ENCODE measurements at regions of chr11 and their contacts with region 1.

Region 1: GRCh38 chr11:35087648-35088047 is 51.3 kb upstream of the CD44 start:
- DNase-seq: no peak
- ATAC-seq: no peak
- H3K4me3 Mint-ChIP-seq: no peak overlapping the region
- H3K27ac Mint-ChIP-seq: peak overlapping the region; percentile 87
- H3K4me1 Mint-ChIP-seq: peaks cover 67% of the 10 kb centered on the region
- H3K27me3 Mint-ChIP-seq: no peaks in the 10 kb centered on the region
- CTCF ChIP-seq: no peak

Region 2: DNA sequence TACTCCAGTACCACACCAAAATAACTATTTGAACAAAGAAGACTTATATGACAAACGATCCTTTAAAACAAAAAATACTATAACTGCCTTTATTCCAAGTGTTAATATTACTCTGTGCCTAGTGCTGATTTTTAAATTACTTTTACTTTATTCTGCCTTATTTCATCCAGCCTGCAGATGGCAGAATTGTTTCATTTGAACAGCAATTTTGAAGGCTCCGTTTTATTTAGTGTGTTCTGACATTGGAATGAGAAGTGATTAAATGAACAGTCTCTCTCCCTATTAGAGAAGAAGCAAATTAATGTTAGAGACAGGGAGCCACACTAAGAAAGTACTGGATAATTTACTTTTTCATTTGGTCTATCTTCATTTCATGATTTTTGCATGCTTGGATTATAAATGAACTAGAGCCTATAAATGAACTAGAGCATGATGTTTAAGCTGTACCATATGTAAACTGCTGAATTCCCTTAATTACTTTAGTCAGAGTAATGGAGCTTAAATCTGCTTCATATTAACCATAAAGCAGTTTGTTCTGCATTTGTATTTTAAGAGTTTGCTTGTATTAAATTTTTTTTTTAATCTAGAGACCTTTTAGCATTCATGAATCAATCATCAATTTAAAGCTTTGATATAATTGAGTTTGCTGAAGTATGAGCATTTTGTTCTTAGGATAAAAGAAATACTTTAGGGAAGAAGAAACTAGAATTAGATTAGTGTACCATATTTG is 161.4 kb before region 1 on chr11:
- CTCF ChIA-PET with region 1: no interaction called
- POLR2A ChIA-PET with region 1: no interaction called
- intact Hi-C with region 1: no loop called
- DNase-seq: no peak
- ATAC-seq: peak; percentile 50
- H3K4me3 Mint-ChIP-seq: no peak overlapping the region
- H3K27ac Mint-ChIP-seq: no peak overlapping the region
- H3K4me1 Mint-ChIP-seq: peaks cover 8% of the 10 kb centered on the region
- H3K27me3 Mint-ChIP-seq: no peaks in the 10 kb centered on the region
- CTCF ChIP-seq: peak; percentile 63

Region 3: GRCh38 chr11:35106595-35106994 is 18.9 kb after region 1 on chr11:
- CTCF ChIA-PET with region 1: no interaction called
- POLR2A ChIA-PET with region 1: interaction called, 4 read pairs
- intact Hi-C with region 1: loop called (anchors 1 kb)
- DNase-seq: no peak
- ATAC-seq: peak; percentile 95
- H3K4me3 Mint-ChIP-seq: peak overlapping the region; percentile 72
- H3K27ac Mint-ChIP-seq: peak overlapping the region; percentile 83
- H3K4me1 Mint-ChIP-seq: peaks cover 71% of the 10 kb centered on the region
- H3K27me3 Mint-ChIP-seq: no peaks in the 10 kb centered on the region
- CTCF ChIP-seq: no peak

Region 4: DNA sequence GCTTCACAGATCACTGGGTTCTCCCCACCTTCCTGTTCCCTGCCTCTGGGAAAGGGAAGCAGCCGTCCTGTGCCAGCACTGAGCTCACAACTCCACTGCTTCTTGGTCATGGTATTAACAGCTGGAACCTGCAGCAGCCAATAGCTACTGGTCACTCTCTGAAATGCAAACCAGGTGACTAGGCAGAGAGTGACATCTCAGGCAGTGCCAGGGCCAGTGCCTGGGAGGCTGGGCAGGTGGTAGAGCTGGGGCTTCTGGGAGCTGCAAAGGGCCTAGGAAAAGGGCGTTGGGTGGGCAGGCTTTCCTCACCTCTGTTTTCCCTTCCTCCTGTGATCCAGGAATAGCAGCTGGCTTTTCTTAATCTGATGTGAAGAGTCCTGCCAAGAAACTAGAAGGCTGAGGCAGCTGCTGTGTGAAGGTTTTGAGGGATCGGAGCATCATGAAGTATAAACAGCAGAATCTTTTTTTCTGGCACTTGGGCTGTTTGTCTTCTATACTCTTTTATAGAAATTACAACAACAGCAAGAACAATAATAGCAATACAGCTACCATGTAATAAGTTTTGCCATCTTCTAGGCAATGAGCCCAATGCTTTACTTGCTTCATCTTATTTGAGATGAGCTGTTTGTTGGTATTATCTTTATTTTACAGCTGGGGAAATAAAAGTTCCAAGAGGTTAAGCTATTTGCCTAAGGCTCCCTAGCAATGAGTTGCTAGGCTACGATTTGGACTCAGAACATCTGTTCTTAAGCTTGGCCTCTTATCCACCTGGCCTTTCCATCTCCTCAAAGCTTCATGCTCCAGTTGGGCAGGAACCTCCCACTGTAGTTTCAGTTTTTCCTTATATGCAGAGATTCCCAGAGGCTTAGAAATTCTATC is 29.4 kb after region 1 on chr11:
- CTCF ChIA-PET with region 1: interaction called, 4 read pairs
- POLR2A ChIA-PET with region 1: interaction called, 11 read pairs
- intact Hi-C with region 1: no loop called
- DNase-seq: no peak
- ATAC-seq: no peak
- H3K4me3 Mint-ChIP-seq: no peak overlapping the region
- H3K27ac Mint-ChIP-seq: peak overlapping the region; percentile 66
- H3K4me1 Mint-ChIP-seq: peaks cover 85% of the 10 kb centered on the region
- H3K27me3 Mint-ChIP-seq: no peaks in the 10 kb centered on the region
- CTCF ChIP-seq: no peak

Region 5: GRCh38 chr11:35144136-35144741 is 56.6 kb after region 1 on chr11:
- CTCF ChIA-PET with region 1: no interaction called
- POLR2A ChIA-PET with region 1: interaction called, 145 read pairs
- intact Hi-C with region 1: loop called (anchors 1 kb)
- DNase-seq: peak; percentile 63
- ATAC-seq: peak; percentile 62
- H3K4me3 Mint-ChIP-seq: peak overlapping the region; percentile 97
- H3K27ac Mint-ChIP-seq: peak overlapping the region; percentile 90
- H3K4me1 Mint-ChIP-seq: peaks cover 81% of the 10 kb centered on the region
- H3K27me3 Mint-ChIP-seq: no peaks in the 10 kb centered on the region
- CTCF ChIP-seq: no peak

Measured in activated B cell treated with CpG ODN at 0.5 μM for 24 hours (primary cell).